CD8-positive, alpha-beta T cell (primary cell): ENCODE measurements at regions of chr3 and their contacts with region 1.

Region 1: GRCh38 chr3:113051302-113051711 is 60.5 kb downstream of the GTPBP8 start:
- DNase-seq: peak; percentile 75 to 91 (median 84)
- ATAC-seq: peak; percentile 100
- H3K4me3 ChIP-seq: no peak overlapping the region
- H3K4me3 Mint-ChIP-seq: no peak overlapping the region
- H3K27ac ChIP-seq: no peak overlapping the region
- H3K27ac Mint-ChIP-seq: no peak overlapping the region
- H3K4me1 ChIP-seq: no peaks in the 10 kb centered on the region
- H3K4me1 Mint-ChIP-seq: no peaks in the 10 kb centered on the region
- H3K27me3 ChIP-seq: no peaks in the 10 kb centered on the region
- H3K27me3 Mint-ChIP-seq: no peaks in the 10 kb centered on the region
- CTCF ChIP-seq: peak; percentile 84

Region 2: GRCh38 chr3:113063126-113063909 is 12.0 kb after region 1 on chr3:
- CTCF ChIA-PET with region 1: no interaction called
- POLR2A ChIA-PET with region 1: no interaction called
- intact Hi-C with region 1: no loop called
- DNase-seq: no peak
- ATAC-seq: no peak
- H3K4me3 ChIP-seq: no peak overlapping the region
- H3K4me3 Mint-ChIP-seq: no peak overlapping the region
- H3K27ac ChIP-seq: no peak overlapping the region
- H3K27ac Mint-ChIP-seq: no peak overlapping the region
- H3K4me1 ChIP-seq: no peaks in the 10 kb centered on the region
- H3K4me1 Mint-ChIP-seq: no peaks in the 10 kb centered on the region
- H3K27me3 ChIP-seq: no peaks in the 10 kb centered on the region
- H3K27me3 Mint-ChIP-seq: no peaks in the 10 kb centered on the region
- CTCF ChIP-seq: no peak

Region 3: GRCh38 chr3:113174801-113175485 is 123.6 kb after region 1 on chr3:
- CTCF ChIA-PET with region 1: no interaction called
- POLR2A ChIA-PET with region 1: no interaction called
- intact Hi-C with region 1: no loop called
- DNase-seq: no peak
- ATAC-seq: no peak
- H3K4me3 ChIP-seq: no peak overlapping the region
- H3K4me3 Mint-ChIP-seq: no peak overlapping the region
- H3K27ac ChIP-seq: no peak overlapping the region
- H3K27ac Mint-ChIP-seq: no peak overlapping the region
- H3K4me1 ChIP-seq: no peaks in the 10 kb centered on the region
- H3K4me1 Mint-ChIP-seq: no peaks in the 10 kb centered on the region
- H3K27me3 ChIP-seq: no peaks in the 10 kb centered on the region
- H3K27me3 Mint-ChIP-seq: peaks cover 2% of the 10 kb centered on the region
- CTCF ChIP-seq: no peak

Region 4: DNA sequence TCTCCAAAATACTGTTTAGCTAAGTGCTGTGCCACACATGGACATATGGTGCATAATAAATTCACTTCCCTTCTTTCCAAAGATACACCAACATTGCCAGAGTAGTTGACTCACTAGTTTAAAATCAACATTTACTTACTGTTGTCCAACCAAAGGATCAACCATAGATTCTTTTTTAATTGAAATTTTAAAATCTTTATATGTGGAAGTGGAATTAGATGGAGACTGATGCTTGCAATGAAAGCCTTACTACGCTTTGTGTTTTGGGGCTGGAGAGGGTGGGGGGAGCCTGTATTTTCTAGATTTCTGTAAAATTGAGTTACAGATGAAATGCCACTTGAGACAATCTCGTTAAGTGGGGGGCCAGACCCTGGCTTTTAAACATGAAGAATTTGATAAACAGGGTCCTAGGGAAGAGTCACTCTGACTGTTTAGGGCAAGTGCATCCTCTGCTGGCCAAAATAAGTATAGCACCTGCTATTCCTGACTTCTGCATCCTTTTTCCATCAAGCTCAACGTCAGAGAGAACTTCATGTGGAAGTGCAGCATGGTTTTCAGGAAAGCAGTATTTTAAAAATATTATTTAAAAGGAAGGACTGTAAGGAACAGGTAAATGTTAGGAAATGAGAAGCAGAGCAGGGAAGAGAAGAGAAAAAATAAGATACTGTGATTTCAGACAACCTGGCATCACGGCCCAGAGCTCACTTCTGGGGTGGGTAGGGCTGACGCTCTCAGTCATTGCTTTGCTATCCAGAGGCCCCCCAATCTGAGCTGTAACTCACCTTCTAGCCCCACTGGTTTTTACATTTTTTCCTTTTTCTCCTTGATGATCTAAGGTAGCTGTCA is 236.7 kb after region 1 on chr3:
- CTCF ChIA-PET with region 1: interaction called, 43 read pairs
- POLR2A ChIA-PET with region 1: no interaction called
- intact Hi-C with region 1: loop called (anchors 1 kb)
- DNase-seq: peak in 7 of 9 experiments; percentile 14 to 68 (median 56)
- ATAC-seq: peak; percentile 59
- H3K4me3 ChIP-seq: no peak overlapping the region
- H3K4me3 Mint-ChIP-seq: no peak overlapping the region
- H3K27ac ChIP-seq: no peak overlapping the region
- H3K27ac Mint-ChIP-seq: no peak overlapping the region
- H3K4me1 ChIP-seq: no peaks in the 10 kb centered on the region
- H3K4me1 Mint-ChIP-seq: no peaks in the 10 kb centered on the region
- H3K27me3 ChIP-seq: no peaks in the 10 kb centered on the region
- H3K27me3 Mint-ChIP-seq: no peaks in the 10 kb centered on the region
- CTCF ChIP-seq: peak; percentile 99

Region 5: GRCh38 chr3:113485161-113485609 is 433.9 kb after region 1 on chr3:
- CTCF ChIA-PET with region 1: no interaction called
- POLR2A ChIA-PET with region 1: no interaction called
- intact Hi-C with region 1: loop called (anchors 5 to 10 kb)
- DNase-seq: peak; percentile 4 to 75 (median 49)
- ATAC-seq: peak; percentile 68
- H3K4me3 ChIP-seq: peak overlapping the region; percentile 11 to 19
- H3K4me3 Mint-ChIP-seq: peak overlapping the region; percentile 60
- H3K27ac ChIP-seq: peak overlapping the region; percentile 14 to 47
- H3K27ac Mint-ChIP-seq: peak overlapping the region; percentile 85
- H3K4me1 ChIP-seq: peaks cover 11% of the 10 kb centered on the region
- H3K4me1 Mint-ChIP-seq: peaks cover 15% of the 10 kb centered on the region
- H3K27me3 ChIP-seq: no peaks in the 10 kb centered on the region
- H3K27me3 Mint-ChIP-seq: no peaks in the 10 kb centered on the region
- CTCF ChIP-seq: no peak

Region 6: GRCh38 chr3:113495035-113495434 is 443.7 kb after region 1 on chr3:
- CTCF ChIA-PET with region 1: no interaction called
- POLR2A ChIA-PET with region 1: no interaction called
- intact Hi-C with region 1: loop called in 1 of 2 experiments (anchors 5 kb)
- DNase-seq: peak in 6 of 9 experiments; percentile 38 to 67 (median 54)
- ATAC-seq: no peak
- H3K4me3 ChIP-seq: no peak overlapping the region
- H3K4me3 Mint-ChIP-seq: no peak overlapping the region
- H3K27ac ChIP-seq: no peak overlapping the region
- H3K27ac Mint-ChIP-seq: no peak overlapping the region
- H3K4me1 ChIP-seq: no peaks in the 10 kb centered on the region
- H3K4me1 Mint-ChIP-seq: no peaks in the 10 kb centered on the region
- H3K27me3 ChIP-seq: no peaks in the 10 kb centered on the region
- H3K27me3 Mint-ChIP-seq: no peaks in the 10 kb centered on the region
- CTCF ChIP-seq: peak; percentile 54

Region 7: DNA sequence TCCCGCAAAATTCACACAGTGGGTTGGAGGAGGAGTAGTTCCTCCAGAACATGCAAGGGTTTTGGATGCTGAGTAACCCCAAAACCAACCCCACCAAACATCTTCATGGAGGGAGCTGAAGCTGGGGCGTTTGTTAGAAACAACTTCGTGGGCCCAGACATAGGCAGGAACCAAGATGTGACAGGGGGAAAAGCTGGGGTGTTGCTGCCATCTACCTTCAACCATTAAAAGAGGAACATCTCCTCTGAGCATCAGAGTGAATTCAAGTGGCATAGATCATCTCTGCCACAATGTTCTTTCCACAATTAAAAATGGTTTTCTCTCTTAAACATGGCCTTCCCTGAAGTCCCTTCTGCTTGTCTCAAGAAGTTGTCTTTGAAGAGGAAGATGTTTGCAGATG is 501.5 kb after region 1 on chr3:
- CTCF ChIA-PET with region 1: no interaction called
- POLR2A ChIA-PET with region 1: no interaction called
- intact Hi-C with region 1: loop called (anchors 2 to 5 kb)
- DNase-seq: peak in 5 of 9 experiments; percentile 30 to 70 (median 55)
- ATAC-seq: peak; percentile 93
- H3K4me3 ChIP-seq: no peak overlapping the region
- H3K4me3 Mint-ChIP-seq: no peak overlapping the region
- H3K27ac ChIP-seq: no peak overlapping the region
- H3K27ac Mint-ChIP-seq: peak overlapping the region; percentile 12
- H3K4me1 ChIP-seq: no peaks in the 10 kb centered on the region
- H3K4me1 Mint-ChIP-seq: peaks cover 62% of the 10 kb centered on the region
- H3K27me3 ChIP-seq: no peaks in the 10 kb centered on the region
- H3K27me3 Mint-ChIP-seq: no peaks in the 10 kb centered on the region
- CTCF ChIP-seq: peak; percentile 40

Region 8: GRCh38 chr3:113912552-113913236 is 861.4 kb after region 1 on chr3:
- CTCF ChIA-PET with region 1: no interaction called
- POLR2A ChIA-PET with region 1: no interaction called
- intact Hi-C with region 1: loop called (anchors 5 to 10 kb)
- DNase-seq: peak in 5 of 9 experiments; percentile 21 to 76 (median 23)
- ATAC-seq: peak; percentile 97
- H3K4me3 ChIP-seq: peak overlapping the region; percentile 13 to 18
- H3K4me3 Mint-ChIP-seq: peak overlapping the region; percentile 56
- H3K27ac ChIP-seq: peak overlapping the region in 1 of 2 experiments; percentile 14
- H3K27ac Mint-ChIP-seq: peak overlapping the region; percentile 30
- H3K4me1 ChIP-seq: peaks cover 5% of the 10 kb centered on the region
- H3K4me1 Mint-ChIP-seq: peaks cover 6% of the 10 kb centered on the region
- H3K27me3 ChIP-seq: no peaks in the 10 kb centered on the region
- H3K27me3 Mint-ChIP-seq: no peaks in the 10 kb centered on the region
- CTCF ChIP-seq: peak; percentile 65

Region 9: GRCh38 chr3:114213627-114214541 is 1162.6 kb after region 1 on chr3:
- CTCF ChIA-PET with region 1: no interaction called
- POLR2A ChIA-PET with region 1: no interaction called
- intact Hi-C with region 1: no loop called
- DNase-seq: peak; percentile 35 to 92 (median 74)
- ATAC-seq: peak; percentile 45
- H3K4me3 ChIP-seq: peak overlapping the region; percentile 55
- H3K4me3 Mint-ChIP-seq: no peak overlapping the region
- H3K27ac ChIP-seq: peak overlapping the region; percentile 91 to 96
- H3K27ac Mint-ChIP-seq: no peak overlapping the region
- H3K4me1 ChIP-seq: peaks cover 60% of the 10 kb centered on the region
- H3K4me1 Mint-ChIP-seq: peaks cover 3% of the 10 kb centered on the region
- H3K27me3 ChIP-seq: no peaks in the 10 kb centered on the region
- H3K27me3 Mint-ChIP-seq: no peaks in the 10 kb centered on the region
- CTCF ChIP-seq: peak; percentile 38